Caco-2 (cell line): ENCODE measurements at regions of chr11 and their contacts with region 1.

Region 1: DNA sequence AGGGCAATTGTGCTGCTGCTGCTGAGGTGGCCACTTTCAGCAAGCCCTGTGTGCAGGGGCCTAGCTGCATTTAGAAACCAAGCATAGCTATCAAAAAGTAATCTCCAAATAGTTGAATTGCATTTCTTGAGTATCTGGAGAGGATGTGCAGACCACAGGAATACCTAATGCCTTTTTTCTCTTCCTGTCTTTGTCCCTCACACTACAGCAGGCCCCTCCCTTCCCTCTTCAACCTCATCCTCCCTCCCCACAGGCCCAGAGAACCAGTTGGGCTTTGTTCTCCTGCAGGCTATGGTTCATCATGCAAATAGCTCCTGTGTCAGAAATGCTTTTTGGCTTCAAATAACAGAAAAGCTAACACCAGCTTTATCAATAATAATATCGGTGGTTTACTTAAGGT is 47.7 kb downstream of the DKK3 start:
- DNase-seq: no peak
- H3K4me3 ChIP-seq: no peak overlapping the region
- H3K4me3 Mint-ChIP-seq: no peak overlapping the region
- H3K27ac Mint-ChIP-seq: no peak overlapping the region
- H3K4me1 ChIP-seq: no peaks in the 10 kb centered on the region
- H3K4me1 Mint-ChIP-seq: no peaks in the 10 kb centered on the region
- H3K27me3 ChIP-seq: no peaks in the 10 kb centered on the region
- H3K27me3 Mint-ChIP-seq: no peaks in the 10 kb centered on the region
- CTCF ChIP-seq: no peak

Region 2: GRCh38 chr11:11916981-11917399 is 43.7 kb before region 1 on chr11:
- CTCF ChIA-PET with region 1: no interaction called
- POLR2A ChIA-PET with region 1: no interaction called
- intact Hi-C with region 1: loop called (anchors 1 kb)
- DNase-seq: no peak
- H3K4me3 ChIP-seq: no peak overlapping the region
- H3K4me3 Mint-ChIP-seq: no peak overlapping the region
- H3K27ac Mint-ChIP-seq: no peak overlapping the region
- H3K4me1 ChIP-seq: no peaks in the 10 kb centered on the region
- H3K4me1 Mint-ChIP-seq: no peaks in the 10 kb centered on the region
- H3K27me3 ChIP-seq: no peaks in the 10 kb centered on the region
- H3K27me3 Mint-ChIP-seq: no peaks in the 10 kb centered on the region
- CTCF ChIP-seq: no peak